ENCODE measurements at regions of chr13 and their contacts with region 1.

Region 1: DNA sequence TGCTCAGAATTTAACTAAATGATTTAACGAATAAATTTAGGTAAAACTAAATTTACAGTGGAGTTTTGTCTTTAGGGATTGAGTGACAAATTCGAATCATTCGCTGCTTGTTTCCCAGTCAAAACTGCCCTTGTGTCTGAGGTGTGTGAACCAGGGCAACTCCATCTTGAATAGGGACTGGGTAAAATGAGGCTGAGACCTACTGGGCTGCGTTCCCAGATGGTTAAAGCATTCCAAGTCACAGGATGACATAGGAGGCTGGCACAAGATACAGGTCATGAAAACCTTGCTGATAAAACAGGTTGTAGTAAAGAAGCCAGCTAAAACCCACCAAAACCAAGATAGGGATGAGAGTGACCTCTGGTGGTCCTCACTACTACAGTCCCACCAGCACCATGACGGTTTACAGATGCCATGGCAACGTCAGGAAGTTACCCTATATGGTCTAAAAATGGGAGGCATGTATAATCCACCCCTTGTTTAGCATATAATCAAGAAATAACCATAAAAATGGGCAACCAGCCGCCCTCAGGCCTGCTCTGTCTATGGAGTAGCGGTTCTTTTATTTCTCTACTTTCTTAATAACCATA is 10.2 kb upstream of the ANKRD10 start:
- DNase-seq: no peak
- ATAC-seq: no peak
- H3K4me3 ChIP-seq: no peak overlapping the region
- H3K27ac ChIP-seq: no peak overlapping the region
- H3K4me1 ChIP-seq: peaks cover under 1% of the 10 kb centered on the region
- H3K27me3 ChIP-seq: no peaks in the 10 kb centered on the region

Region 2: DNA sequence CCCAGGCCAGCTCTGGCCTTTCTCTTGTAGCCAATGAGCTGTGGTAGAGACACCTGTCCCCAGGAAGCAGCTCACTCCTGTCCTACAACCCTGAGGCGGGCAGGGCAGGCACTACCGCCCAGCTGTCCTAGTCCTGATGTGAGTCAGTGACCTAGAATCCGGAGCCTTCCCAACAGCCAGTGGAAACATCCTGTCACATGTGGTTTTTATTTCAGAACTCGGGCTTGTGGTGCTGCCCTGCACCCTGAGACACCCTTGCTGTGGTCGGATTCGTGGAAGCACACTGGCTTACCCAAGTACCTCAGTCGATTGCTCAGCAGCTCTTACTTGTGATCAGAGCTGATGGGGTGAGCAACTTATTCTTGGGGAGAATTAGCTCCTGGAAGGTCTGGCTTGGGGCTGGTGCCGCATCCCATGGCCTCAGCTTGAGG is 106.4 kb after region 1 on chr13:
- intact Hi-C with region 1: loop called in 2 of 4 experiments (anchors 10 kb)
- DNase-seq: no peak
- ATAC-seq: no peak
- H3K4me3 ChIP-seq: no peak overlapping the region
- H3K27ac ChIP-seq: no peak overlapping the region
- H3K4me1 ChIP-seq: no peaks in the 10 kb centered on the region
- H3K27me3 ChIP-seq: no peaks in the 10 kb centered on the region

Region 3: GRCh38 chr13:111327730-111328573 is 402.8 kb after region 1 on chr13:
- intact Hi-C with region 1: no loop called
- DNase-seq: no peak
- ATAC-seq: no peak
- H3K4me3 ChIP-seq: no peak overlapping the region
- H3K27ac ChIP-seq: no peak overlapping the region
- H3K4me1 ChIP-seq: no peaks in the 10 kb centered on the region
- H3K27me3 ChIP-seq: no peaks in the 10 kb centered on the region

Measured in right cardiac atrium (tissue), 5 donors.